MCF 10A (cell line): ENCODE measurements at regions of chr4 and their contacts with region 1.

Region 1: GRCh38 chr4:173420324-173420752 is 21.4 kb upstream of the SCRG1 start:
- DNase-seq: peak; percentile 31
- H3K4me3 Mint-ChIP-seq: no peak overlapping the region
- H3K27ac Mint-ChIP-seq: no peak overlapping the region
- H3K4me1 Mint-ChIP-seq: peaks cover 15% of the 10 kb centered on the region
- H3K27me3 Mint-ChIP-seq: no peaks in the 10 kb centered on the region
- CTCF ChIP-seq: peak; percentile 39

Region 2: DNA sequence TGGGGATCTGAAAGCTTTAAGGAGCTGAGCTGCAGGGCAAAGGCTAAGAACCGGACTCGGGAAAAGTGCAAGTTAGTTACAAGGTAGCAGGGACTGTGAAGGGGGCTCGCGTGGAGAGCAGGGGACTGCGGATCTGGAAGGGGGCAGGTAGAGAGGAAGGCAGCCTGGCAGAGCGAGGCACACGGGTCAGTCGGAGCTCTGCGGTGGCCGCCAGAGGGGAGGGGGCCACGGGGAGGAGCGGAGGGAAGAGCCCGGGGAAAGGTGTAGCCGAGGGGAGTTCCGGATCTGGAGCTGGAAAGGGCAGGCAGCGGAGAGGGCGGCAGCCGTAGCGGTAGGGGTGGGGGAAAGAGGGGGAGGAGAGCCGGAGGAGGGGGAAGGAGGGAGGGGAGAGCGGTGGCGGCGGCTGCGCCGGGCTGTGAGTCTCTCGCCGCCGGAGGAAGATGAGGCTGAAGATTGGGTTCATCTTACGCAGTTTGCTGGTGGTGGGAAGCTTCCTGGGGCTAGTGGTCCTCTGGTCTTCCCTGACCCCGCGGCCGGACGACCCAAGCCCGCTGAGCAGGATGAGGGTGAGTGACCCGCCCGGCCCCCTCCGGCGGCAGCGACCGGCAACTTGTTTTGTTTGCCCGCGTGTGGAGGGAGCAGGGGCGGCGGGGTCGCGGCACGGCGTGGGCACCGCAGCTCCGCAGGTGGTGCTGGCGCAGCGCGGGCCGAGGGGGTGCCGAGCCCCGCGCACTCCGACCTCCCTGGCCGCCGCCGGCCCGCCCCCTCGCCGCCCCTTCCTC is 251.8 kb before region 1 on chr4 and contains the start of gene GALNT7:
- CTCF ChIA-PET with region 1: interaction called, 4 read pairs
- POLR2A ChIA-PET with region 1: no interaction called
- intact Hi-C with region 1: loop called (anchors 10 kb)
- DNase-seq: peak; percentile 73
- H3K4me3 Mint-ChIP-seq: peak within 1 kb of the TSS; percentile 100
- H3K27ac Mint-ChIP-seq: peak within 1 kb of the TSS; percentile 59
- H3K4me1 Mint-ChIP-seq: peaks cover 21% of the 10 kb centered on the region
- H3K27me3 Mint-ChIP-seq: no peaks in the 10 kb centered on the region
- CTCF ChIP-seq: no peak
- total RNA-seq, gene GALNT7: 13.7 and 19.9 TPM in 2 replicates

Region 3: GRCh38 chr4:173334085-173334772 is 86.1 kb before region 1 on chr4 and contains the start of gene HMGB2:
- CTCF ChIA-PET with region 1: interaction called, 78 read pairs
- POLR2A ChIA-PET with region 1: interaction called, 109 read pairs
- intact Hi-C with region 1: loop called (anchors 1 kb)
- DNase-seq: peak; percentile 100
- H3K4me3 Mint-ChIP-seq: peak within 1 kb of the TSS; percentile 99
- H3K27ac Mint-ChIP-seq: peak within 1 kb of the TSS; percentile 100
- H3K4me1 Mint-ChIP-seq: peaks cover 14% of the 10 kb centered on the region
- H3K27me3 Mint-ChIP-seq: no peaks in the 10 kb centered on the region
- CTCF ChIP-seq: no peak
- total RNA-seq, gene HMGB2: 124 and 176 TPM in 2 replicates

Region 4: GRCh38 chr4:173478201-173478912 is 58.0 kb after region 1 on chr4:
- CTCF ChIA-PET with region 1: interaction called, 10 read pairs
- POLR2A ChIA-PET with region 1: interaction called, 3 read pairs
- intact Hi-C with region 1: no loop called
- DNase-seq: no peak
- H3K4me3 Mint-ChIP-seq: no peak overlapping the region
- H3K27ac Mint-ChIP-seq: no peak overlapping the region
- H3K4me1 Mint-ChIP-seq: peaks cover 8% of the 10 kb centered on the region
- H3K27me3 Mint-ChIP-seq: no peaks in the 10 kb centered on the region
- CTCF ChIP-seq: no peak

Region 5: DNA sequence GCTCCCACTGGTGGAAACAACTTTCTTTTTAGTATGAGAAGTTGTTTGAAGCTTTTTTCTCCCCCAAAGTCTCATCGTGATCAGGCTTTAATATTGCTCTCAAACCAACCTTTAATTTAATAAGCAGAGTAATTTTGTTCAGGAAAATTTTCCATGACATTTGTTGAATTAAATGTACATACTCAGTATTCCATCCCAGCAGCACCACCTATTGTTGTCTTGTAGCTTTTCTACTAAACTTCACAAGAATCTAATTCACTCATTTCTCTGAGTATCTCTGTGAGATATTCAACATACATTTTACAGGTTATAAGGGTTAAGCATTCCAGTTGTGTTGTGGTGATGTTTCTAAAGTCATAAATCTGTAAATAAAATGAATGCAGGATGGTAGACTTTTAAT is 328.0 kb after region 1 on chr4:
- CTCF ChIA-PET with region 1: interaction called, 5 read pairs
- POLR2A ChIA-PET with region 1: no interaction called
- intact Hi-C with region 1: loop called (anchors 1 kb)
- DNase-seq: no peak
- H3K4me3 Mint-ChIP-seq: no peak overlapping the region
- H3K27ac Mint-ChIP-seq: no peak overlapping the region
- H3K4me1 Mint-ChIP-seq: no peaks in the 10 kb centered on the region
- H3K27me3 Mint-ChIP-seq: peaks cover 78% of the 10 kb centered on the region
- CTCF ChIP-seq: peak; percentile 28

Region 6: GRCh38 chr4:174086829-174087799 is 666.8 kb after region 1 on chr4:
- CTCF ChIA-PET with region 1: no interaction called
- POLR2A ChIA-PET with region 1: no interaction called
- intact Hi-C with region 1: no loop called
- DNase-seq: no peak
- H3K4me3 Mint-ChIP-seq: no peak overlapping the region
- H3K27ac Mint-ChIP-seq: no peak overlapping the region
- H3K4me1 Mint-ChIP-seq: no peaks in the 10 kb centered on the region
- H3K27me3 Mint-ChIP-seq: peaks cover 59% of the 10 kb centered on the region
- CTCF ChIP-seq: no peak

Region 7: DNA sequence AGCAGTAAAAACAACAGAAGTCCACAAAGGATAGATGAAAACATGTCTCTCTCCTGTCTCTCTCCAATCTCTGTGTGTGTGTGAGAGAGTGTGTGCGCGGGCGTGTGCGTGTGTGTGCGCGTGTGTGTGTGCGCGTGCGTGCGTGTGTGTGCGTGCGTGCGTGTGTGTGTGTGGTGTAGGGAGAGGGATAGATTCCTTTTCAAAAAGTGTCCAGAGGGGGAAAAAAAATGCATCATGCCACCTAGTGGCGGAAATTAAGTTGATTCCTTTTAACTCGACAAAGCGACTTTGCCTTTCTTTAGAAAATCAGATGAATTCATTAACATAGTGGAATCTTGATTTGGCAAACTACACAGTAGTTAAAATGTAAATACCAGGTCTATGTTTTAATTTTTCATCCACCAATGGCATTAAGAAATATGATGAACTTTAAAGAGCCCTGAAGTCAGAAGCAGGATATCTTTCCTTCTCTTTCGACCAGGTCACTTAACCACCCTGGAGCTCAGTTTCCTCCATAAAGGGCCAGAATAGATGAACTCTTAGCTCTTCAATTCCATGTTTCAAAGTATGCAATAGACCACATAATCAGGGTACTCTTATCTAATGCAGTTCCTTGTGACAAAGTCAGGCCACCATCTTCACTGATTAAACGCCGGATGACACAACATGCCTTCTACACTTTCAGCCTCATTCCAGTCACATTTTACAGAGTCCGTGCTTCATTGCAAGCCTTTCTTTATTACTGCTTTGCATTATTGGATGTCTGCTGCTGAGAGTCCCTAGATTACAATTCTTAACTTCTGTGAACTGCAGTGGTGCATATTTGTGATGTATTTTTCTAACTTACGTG is 700.3 kb after region 1 on chr4:
- CTCF ChIA-PET with region 1: interaction called, 20 read pairs
- POLR2A ChIA-PET with region 1: no interaction called
- intact Hi-C with region 1: loop called (anchors 1 kb)
- DNase-seq: peak; percentile 66
- H3K4me3 Mint-ChIP-seq: peak overlapping the region; percentile 73
- H3K27ac Mint-ChIP-seq: no peak overlapping the region
- H3K4me1 Mint-ChIP-seq: no peaks in the 10 kb centered on the region
- H3K27me3 Mint-ChIP-seq: peaks cover 84% of the 10 kb centered on the region
- CTCF ChIP-seq: peak; percentile 32